Esophagus squamous epithelium (tissue), 5 donors: ENCODE measurements at regions of chr10 and their contacts with region 1.

Region 1: DNA sequence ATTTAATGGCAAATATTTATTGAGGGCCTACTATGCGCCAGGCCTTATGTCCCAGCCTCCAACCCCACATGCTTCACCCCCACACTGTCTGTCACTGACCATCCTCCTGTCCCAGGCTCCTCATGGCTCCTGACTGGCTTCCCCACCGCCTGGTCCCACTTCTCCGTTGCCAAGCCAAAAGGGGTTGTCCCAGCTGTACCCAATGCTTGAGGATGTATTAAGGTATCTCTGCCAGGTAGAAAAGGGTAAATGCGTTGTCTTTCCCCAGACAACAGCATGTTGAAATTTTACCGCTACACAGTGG is 168.8 kb upstream of the FRMD4A start:
- DNase-seq: no peak
- H3K4me3 ChIP-seq: no peak overlapping the region
- H3K27ac ChIP-seq: no peak overlapping the region
- H3K4me1 ChIP-seq: peaks cover 0 to 8% (median 0%) of the 10 kb centered on the region in 3 donors
- H3K27me3 ChIP-seq: no peaks in the 10 kb centered on the region
- CTCF ChIP-seq: no peak
- POLR2A ChIP-seq: no peak

Region 2: DNA sequence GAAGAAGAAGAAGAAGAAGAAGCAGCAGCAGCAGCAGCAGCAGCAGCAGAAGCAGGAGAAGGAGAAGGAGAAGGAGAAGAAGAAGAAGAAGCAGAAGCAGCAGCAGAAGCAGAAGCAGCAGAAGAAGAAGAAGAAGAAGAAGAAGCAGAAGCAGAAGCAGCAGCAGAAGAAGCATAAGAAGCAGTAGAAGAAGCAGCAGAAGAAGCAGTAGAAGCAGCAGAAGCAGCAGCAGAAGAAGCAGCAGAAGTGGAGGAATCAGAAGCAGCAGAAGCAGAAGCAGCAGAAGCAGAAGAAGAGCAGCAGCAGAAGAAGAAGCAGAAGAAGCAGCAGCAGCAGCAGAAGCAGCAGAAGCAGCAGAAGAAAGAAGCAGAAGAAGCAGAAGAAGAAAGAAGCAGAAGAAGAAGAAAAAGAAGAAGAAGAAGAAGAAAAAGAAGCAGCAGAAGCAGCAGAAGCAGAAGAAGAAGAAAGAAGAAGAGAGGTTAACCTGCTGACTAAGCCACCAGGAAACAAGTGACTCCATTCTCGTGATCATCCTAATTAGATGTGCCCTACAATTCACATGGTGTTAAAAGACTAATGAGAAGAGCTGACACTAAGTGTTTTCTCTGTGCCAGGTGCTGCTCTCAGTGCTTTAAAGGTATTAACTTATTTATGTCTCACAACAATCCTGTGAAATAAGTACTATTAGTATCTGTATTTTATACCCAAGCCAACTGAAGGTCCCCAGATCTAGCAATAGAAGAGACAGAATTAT is 326.7 kb after region 1 on chr10:
- intact Hi-C with region 1: loop called (anchors 5 kb)
- DNase-seq: no peak
- H3K4me3 ChIP-seq: no peak overlapping the region
- H3K27ac ChIP-seq: no peak overlapping the region
- H3K4me1 ChIP-seq: no peaks in the 10 kb centered on the region
- H3K27me3 ChIP-seq: no peaks in the 10 kb centered on the region
- CTCF ChIP-seq: no peak
- POLR2A ChIP-seq: no peak